GM12878 (cell line): ENCODE measurements at regions of chr11 and their contacts with region 1.

Region 1: GRCh38 chr11:65593518-65594298 is 1.9 kb downstream of the KCNK7 start:
- DNase-seq: no peak
- ATAC-seq: peak; percentile 68
- H3K4me3 ChIP-seq: no peak overlapping the region
- H3K27ac ChIP-seq: no peak overlapping the region
- H3K4me1 ChIP-seq: peaks cover 11% of the 10 kb centered on the region
- H3K27me3 ChIP-seq: no peaks in the 10 kb centered on the region
- CTCF ChIP-seq: peak; percentile 62 to 71 (median 63)
- EP300 ChIP-seq: no peak
- POLR2A ChIP-seq: peak; percentile 48
- RAD21 ChIP-seq: peak; percentile 44

Region 2: DNA sequence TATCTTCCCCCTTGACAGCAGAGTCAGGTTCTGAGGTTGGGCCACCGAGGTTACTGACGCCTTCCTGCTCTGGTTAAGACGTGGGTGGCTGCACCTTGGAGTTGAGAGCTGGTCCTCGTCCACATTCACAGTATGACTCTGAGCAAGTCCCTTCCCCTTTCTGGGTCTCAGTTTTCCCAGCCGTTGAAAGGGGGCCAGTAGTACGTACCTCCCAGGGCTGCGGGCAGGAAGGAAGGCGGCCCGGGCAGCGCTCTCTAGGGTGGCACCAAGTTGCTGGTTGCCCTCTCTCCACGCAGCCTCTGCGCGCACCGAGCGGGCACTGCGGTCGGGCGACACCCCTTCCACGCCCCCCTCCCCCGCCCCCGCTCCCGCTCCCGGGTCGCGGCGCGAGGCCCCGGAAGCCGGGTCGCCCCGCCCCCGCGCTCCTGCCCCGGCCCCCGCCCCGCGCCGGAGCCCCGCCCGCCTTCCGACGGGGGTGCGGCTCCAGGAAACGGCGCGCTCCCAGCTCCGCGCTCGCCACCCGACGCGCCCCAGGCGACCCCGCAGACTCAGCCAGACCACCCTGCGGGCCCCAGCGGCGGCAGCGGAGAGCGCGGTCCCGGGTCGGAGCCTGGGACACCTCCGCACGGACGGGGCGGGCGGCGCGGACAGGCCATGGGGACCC is 18.0 kb before region 1 on chr11 and contains the start of gene EHBP1L1:
- CTCF ChIA-PET with region 1: interaction called, 130 read pairs
- POLR2A ChIA-PET with region 1: interaction called, 129 read pairs
- RAD21 ChIA-PET with region 1: interaction called, 132 read pairs
- SMC1A ChIA-PET with region 1: interaction called, 93 read pairs
- in situ Hi-C with region 1: no loop called
- intact Hi-C with region 1: loop called (anchors 1 kb)
- DNase-seq: peak; percentile 70
- ATAC-seq: peak; percentile 27
- H3K4me3 ChIP-seq: peak within 1 kb of the TSS; percentile 97
- H3K27ac ChIP-seq: peak within 1 kb of the TSS; percentile 96
- H3K4me1 ChIP-seq: peaks cover 35% of the 10 kb centered on the region
- H3K27me3 ChIP-seq: no peaks in the 10 kb centered on the region
- CTCF ChIP-seq: no peak
- EP300 ChIP-seq: peak in 1 of 2 experiments; percentile 52; a peak in 1 of 4 replicates
- POLR2A ChIP-seq: peak; percentile 76
- RAD21 ChIP-seq: no peak
- polyA plus RNA-seq, gene EHBP1L1: 0.06 to 0.09 TPM

Region 3: GRCh38 chr11:65606876-65607613 is 13.3 kb after region 1 on chr11:
- CTCF ChIA-PET with region 1: interaction called, 35 read pairs
- POLR2A ChIA-PET with region 1: interaction called, 12 read pairs
- RAD21 ChIA-PET with region 1: interaction called, 16 read pairs
- SMC1A ChIA-PET with region 1: interaction called, 6 read pairs
- in situ Hi-C with region 1: no loop called
- intact Hi-C with region 1: no loop called
- DNase-seq: no peak
- ATAC-seq: peak; percentile 44
- H3K4me3 ChIP-seq: no peak overlapping the region
- H3K27ac ChIP-seq: no peak overlapping the region
- H3K4me1 ChIP-seq: peaks cover 4% of the 10 kb centered on the region
- H3K27me3 ChIP-seq: no peaks in the 10 kb centered on the region
- CTCF ChIP-seq: no peak
- EP300 ChIP-seq: no peak
- POLR2A ChIP-seq: no peak
- RAD21 ChIP-seq: no peak

Region 4: DNA sequence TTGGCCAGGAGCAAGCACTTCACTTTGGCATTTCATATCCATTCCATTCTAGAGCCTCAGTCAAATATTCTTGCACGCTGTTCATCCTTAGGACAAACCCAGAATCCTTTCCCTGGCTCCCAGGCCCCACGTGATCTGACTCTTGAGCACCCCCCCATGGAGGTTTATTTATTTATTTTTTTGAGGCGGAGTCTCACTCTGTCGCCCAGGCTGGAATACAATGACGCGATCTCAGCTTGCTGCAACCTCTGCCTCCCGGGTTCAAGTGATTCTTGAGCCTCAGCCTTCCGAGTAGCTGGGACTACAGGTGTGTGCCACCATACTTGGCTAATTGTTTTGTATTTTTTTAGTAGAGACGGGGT is 338.8 kb after region 1 on chr11:
- CTCF ChIA-PET with region 1: no interaction called
- POLR2A ChIA-PET with region 1: no interaction called
- RAD21 ChIA-PET with region 1: no interaction called
- SMC1A ChIA-PET with region 1: no interaction called
- in situ Hi-C with region 1: no loop called
- intact Hi-C with region 1: no loop called
- DNase-seq: no peak
- ATAC-seq: no peak
- H3K4me3 ChIP-seq: no peak overlapping the region
- H3K27ac ChIP-seq: no peak overlapping the region
- H3K4me1 ChIP-seq: peaks cover 15% of the 10 kb centered on the region
- H3K27me3 ChIP-seq: no peaks in the 10 kb centered on the region
- CTCF ChIP-seq: no peak
- EP300 ChIP-seq: no peak
- POLR2A ChIP-seq: no peak
- RAD21 ChIP-seq: no peak

Region 5: GRCh38 chr11:66762088-66762487 is 1168.4 kb after region 1 on chr11:
- CTCF ChIA-PET with region 1: no interaction called
- POLR2A ChIA-PET with region 1: no interaction called
- RAD21 ChIA-PET with region 1: no interaction called
- SMC1A ChIA-PET with region 1: no interaction called
- in situ Hi-C with region 1: no loop called
- intact Hi-C with region 1: no loop called
- DNase-seq: no peak
- ATAC-seq: no peak
- H3K4me3 ChIP-seq: no peak overlapping the region
- H3K27ac ChIP-seq: no peak overlapping the region
- H3K4me1 ChIP-seq: no peaks in the 10 kb centered on the region
- H3K27me3 ChIP-seq: no peaks in the 10 kb centered on the region
- CTCF ChIP-seq: no peak
- EP300 ChIP-seq: no peak
- POLR2A ChIP-seq: no peak
- RAD21 ChIP-seq: no peak